Endothelial cell of umbilical vein (primary cell): ENCODE measurements at regions of chr5 and their contacts with region 1.

Region 1: GRCh38 chr5:160439205-160439600 is 17.5 kb downstream of the PTTG1 start:
- DNase-seq: peak; percentile 91
- H3K4me3 ChIP-seq: peak overlapping the region in 2 of 3 experiments; percentile 30 to 34
- H3K27ac ChIP-seq: no peak overlapping the region
- H3K4me1 ChIP-seq: peaks cover 10% of the 10 kb centered on the region
- H3K27me3 ChIP-seq: peaks cover 0 to 6% of the 10 kb centered on the region in 2 experiments
- CTCF ChIP-seq: peak; percentile 86 to 90
- POLR2A ChIP-seq: no peak

Region 2: DNA sequence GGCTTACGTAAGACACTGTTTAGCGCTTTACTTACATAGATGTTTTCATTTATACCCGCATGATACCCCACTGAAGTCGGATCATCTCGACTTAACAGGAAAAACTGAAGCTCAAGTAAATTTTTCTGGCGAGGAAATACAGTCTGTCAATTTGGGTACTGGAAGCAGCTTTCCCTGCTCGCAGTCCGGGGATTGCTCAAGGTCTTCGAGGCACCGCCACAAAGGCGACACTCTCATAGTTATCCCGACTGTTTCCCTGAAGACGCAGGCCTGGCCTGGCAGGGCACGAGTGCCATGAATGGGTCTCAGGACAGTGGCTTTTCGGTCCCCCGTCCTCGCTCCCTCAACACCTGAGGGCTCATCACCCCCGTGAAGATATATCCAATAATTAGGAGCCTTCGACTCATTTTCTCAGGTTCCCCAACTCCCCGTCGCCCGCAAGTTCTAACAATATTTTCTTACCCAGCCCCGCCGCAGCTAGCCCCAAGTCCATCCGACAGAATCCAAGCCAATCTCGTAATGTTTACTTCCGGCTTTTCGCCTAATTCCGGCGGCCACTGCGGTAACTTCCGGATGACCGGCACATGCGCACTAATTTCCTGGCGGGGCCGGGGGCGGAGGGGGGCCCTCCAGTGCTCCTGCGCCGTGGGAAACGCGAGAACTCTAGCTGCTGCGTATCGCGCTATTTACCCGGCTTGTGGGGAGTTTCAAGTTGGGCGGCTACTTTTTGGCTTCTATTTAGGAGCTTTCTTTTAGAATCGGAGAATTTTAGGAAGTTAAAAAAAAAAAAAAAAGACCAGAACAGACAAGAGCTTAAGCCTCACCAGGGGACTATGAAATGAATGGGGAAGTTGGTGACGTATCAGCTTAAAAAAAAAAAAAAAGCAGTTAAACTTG is 20.4 kb before region 1 on chr5 and contains the start of gene SLU7:
- CTCF ChIA-PET with region 1: interaction called, 54 read pairs
- POLR2A ChIA-PET with region 1: no interaction called
- dilution Hi-C with region 1: no loop called
- intact Hi-C with region 1: no loop called
- DNase-seq: peak; percentile 98
- H3K4me3 ChIP-seq: peak within 1 kb of the TSS; percentile 70 to 100 (median 91)
- H3K27ac ChIP-seq: peak within 1 kb of the TSS; percentile 73
- H3K4me1 ChIP-seq: peaks cover 39% of the 10 kb centered on the region
- H3K27me3 ChIP-seq: no peaks in the 10 kb centered on the region
- CTCF ChIP-seq: no peak
- POLR2A ChIP-seq: no peak
- total RNA-seq, gene SLU7: 42.7 and 48.2 TPM in 2 replicates

Region 3: GRCh38 chr5:160450164-160450932 is 11.1 kb after region 1 on chr5:
- CTCF ChIA-PET with region 1: interaction called, 18 read pairs
- POLR2A ChIA-PET with region 1: no interaction called
- dilution Hi-C with region 1: no loop called
- intact Hi-C with region 1: loop called (anchors 1 kb)
- DNase-seq: peak; percentile 75
- H3K4me3 ChIP-seq: no peak overlapping the region
- H3K27ac ChIP-seq: peak overlapping the region; percentile 97
- H3K4me1 ChIP-seq: peaks cover 41% of the 10 kb centered on the region
- H3K27me3 ChIP-seq: no peaks in the 10 kb centered on the region
- CTCF ChIP-seq: no peak
- POLR2A ChIP-seq: no peak

Region 4: DNA sequence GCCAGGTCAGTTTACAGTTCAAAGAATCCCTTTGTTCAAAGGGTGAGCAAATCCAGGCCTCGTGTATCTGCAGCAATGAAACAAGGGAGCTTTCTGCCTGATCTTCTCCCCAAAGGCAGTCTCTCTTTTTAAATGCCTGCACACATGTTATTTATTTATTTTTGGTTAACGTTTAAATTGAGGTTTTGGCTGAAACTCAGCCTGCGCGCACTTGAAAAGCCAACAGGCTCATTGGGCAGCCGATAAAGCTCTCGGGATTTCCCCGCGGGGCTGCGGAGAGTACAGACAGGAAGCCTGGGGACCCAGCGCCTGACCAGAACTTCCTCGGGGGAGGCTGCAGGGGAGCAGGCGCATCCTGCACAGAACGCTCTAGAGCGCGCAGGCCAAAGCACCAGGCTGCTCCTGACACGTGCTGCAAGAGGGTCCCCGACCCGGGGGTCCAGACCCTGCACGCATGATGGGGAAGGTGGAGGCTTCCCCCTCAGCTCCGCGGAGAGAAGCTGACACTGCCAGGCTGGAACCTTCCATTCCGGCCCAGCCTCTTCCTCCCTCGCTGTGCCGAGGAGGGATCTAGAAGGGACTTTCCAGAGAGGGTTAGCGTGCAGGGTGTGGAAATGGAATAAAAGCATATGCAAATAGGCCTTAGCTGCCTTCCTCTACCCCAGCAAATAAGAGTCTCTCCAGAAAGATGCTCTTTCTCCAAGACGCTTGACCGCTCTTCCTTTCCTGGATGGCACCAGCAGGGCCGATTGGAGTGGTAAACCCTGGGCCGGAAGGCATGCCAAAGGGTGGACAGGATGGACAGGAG is 28.6 kb after region 1 on chr5:
- CTCF ChIA-PET with region 1: interaction called, 37 read pairs
- POLR2A ChIA-PET with region 1: no interaction called
- dilution Hi-C with region 1: no loop called
- intact Hi-C with region 1: no loop called
- DNase-seq: peak; percentile 89
- H3K4me3 ChIP-seq: peak overlapping the region; percentile 1 to 51 (median 3)
- H3K27ac ChIP-seq: peak overlapping the region; percentile 67
- H3K4me1 ChIP-seq: peaks cover 60% of the 10 kb centered on the region
- H3K27me3 ChIP-seq: no peaks in the 10 kb centered on the region
- CTCF ChIP-seq: no peak
- POLR2A ChIP-seq: no peak

Region 5: DNA sequence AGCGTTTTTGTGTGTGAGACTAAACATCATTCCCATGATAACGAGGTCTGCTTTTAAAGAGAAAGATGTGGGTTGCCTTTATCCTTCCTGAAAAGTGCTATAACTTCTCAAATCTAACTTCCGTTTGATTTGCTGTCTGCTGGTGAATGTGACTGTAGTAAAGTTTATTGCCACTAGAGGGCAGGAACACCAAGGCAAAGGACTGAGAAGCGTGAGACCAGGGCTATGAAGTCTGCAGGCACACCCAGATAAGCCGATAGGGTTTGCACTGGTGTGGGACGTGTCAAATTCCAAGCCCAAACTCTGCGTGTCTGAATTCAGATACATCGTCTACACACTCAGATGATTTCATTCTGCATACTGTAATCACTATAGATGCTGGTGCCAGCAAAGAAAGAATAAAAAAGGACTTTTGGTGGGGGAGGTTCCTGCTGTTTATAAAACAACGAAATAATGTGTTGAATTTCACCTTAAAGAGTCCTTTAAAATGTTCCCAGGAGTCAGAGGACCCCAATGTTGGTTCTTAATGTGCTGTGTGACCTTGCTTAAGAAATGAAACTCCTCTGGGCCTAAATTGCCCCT is 69.7 kb after region 1 on chr5:
- CTCF ChIA-PET with region 1: interaction called, 117 read pairs
- POLR2A ChIA-PET with region 1: no interaction called
- dilution Hi-C with region 1: no loop called
- intact Hi-C with region 1: loop called (anchors 1 kb)
- DNase-seq: peak; percentile 81
- H3K4me3 ChIP-seq: no peak overlapping the region
- H3K27ac ChIP-seq: no peak overlapping the region
- H3K4me1 ChIP-seq: no peaks in the 10 kb centered on the region
- H3K27me3 ChIP-seq: peaks cover 0 to 5% of the 10 kb centered on the region in 2 experiments
- CTCF ChIP-seq: peak; percentile 70
- POLR2A ChIP-seq: no peak

Region 6: DNA sequence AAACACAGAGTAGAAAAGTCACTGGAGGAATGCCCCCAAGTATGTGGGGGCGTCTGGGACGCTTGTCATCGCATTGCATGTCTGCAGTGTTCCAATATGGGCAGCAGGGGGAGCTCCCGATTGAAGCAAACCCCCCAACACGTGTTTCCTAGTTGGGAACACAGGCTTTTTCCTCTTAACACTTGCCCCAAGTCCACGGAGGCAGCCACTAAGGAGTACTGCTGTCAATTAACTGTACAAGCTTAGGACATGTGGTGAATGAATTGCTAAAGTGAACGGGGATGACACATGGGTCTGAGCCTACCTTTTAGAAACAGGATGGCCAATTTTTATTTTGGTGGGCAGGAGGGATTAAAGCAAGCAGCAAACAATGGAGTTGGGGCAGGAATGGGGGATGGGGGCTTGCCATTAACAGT is 1105.2 kb after region 1 on chr5:
- CTCF ChIA-PET with region 1: interaction called, 6 read pairs
- POLR2A ChIA-PET with region 1: no interaction called
- dilution Hi-C with region 1: no loop called
- intact Hi-C with region 1: loop called (anchors 2 kb)
- DNase-seq: peak; percentile 12
- H3K4me3 ChIP-seq: no peak overlapping the region
- H3K27ac ChIP-seq: no peak overlapping the region
- H3K4me1 ChIP-seq: no peaks in the 10 kb centered on the region
- H3K27me3 ChIP-seq: peaks cover 9 to 28% of the 10 kb centered on the region in 2 experiments
- CTCF ChIP-seq: peak; percentile 66 to 72
- POLR2A ChIP-seq: no peak